Activated CD4-positive, alpha-beta memory T cell treated with anti-CD3 and anti-CD28 coated beads, Interleukin-2, amount 10 ng/mL, durations not matched to agents 7 days and 5 days (primary cell): ENCODE measurements at regions of chr5 and their contacts with region 1.

Region 1: GRCh38 chr5:43313035-43313853 is at the start of gene HMGCS1:
- DNase-seq: peak; percentile 99
- H3K4me3 Mint-ChIP-seq: peak within 1 kb of the TSS; percentile 99
- H3K27ac Mint-ChIP-seq: peak within 1 kb of the TSS; percentile 85
- H3K4me1 Mint-ChIP-seq: peaks cover 73% of the 10 kb centered on the region
- H3K27me3 Mint-ChIP-seq: no peaks in the 10 kb centered on the region
- total RNA-seq, gene HMGCS1: 150 to 155 TPM

Region 2: GRCh38 chr5:42950440-42951292 is 362.6 kb before region 1 on chr5:
- CTCF ChIA-PET with region 1: no interaction called
- POLR2A ChIA-PET with region 1: interaction called, 22 read pairs
- DNase-seq: peak; percentile 77
- H3K4me3 Mint-ChIP-seq: peak overlapping the region; percentile 85
- H3K27ac Mint-ChIP-seq: peak overlapping the region; percentile 100
- H3K4me1 Mint-ChIP-seq: peaks cover 37% of the 10 kb centered on the region
- H3K27me3 Mint-ChIP-seq: no peaks in the 10 kb centered on the region

Region 3: DNA sequence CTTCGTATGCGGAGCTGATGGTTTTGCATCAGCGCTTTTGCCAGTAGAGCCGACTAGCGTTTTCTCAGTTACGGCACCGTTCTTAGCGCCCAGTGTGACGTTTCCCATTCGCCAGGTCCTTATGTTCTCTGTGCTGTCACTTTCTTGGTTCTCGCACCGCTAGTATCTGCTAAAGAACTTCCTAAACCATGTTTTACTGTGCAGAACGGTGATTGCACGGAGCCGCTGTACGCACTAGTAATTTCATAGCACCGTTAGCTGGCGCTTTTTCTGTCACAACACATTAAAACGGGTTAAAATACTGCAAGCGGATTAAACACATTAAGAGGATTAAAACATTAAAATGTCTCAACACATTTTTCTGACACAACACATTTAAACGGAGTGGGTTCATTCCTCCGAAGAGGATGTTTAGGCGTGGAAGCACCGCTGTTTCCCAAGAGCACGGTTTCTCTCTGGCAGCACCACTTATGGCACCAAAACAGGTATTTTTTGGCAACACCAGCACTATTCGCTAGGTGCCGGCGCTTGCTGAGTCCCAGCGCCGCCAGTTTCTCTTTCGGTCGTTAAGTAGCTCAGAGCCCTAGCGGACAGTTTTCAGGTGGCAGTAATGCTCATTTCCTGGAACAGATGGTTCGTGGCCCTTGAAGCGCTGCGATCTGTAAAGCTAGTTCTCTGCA is 293.5 kb before region 1 on chr5:
- CTCF ChIA-PET with region 1: interaction called, 8 read pairs
- POLR2A ChIA-PET with region 1: interaction called, 23 read pairs
- DNase-seq: peak; percentile 90
- H3K4me3 Mint-ChIP-seq: peak overlapping the region; percentile 93
- H3K27ac Mint-ChIP-seq: peak overlapping the region; percentile 99
- H3K4me1 Mint-ChIP-seq: peaks cover 42% of the 10 kb centered on the region
- H3K27me3 Mint-ChIP-seq: no peaks in the 10 kb centered on the region

Region 4: DNA sequence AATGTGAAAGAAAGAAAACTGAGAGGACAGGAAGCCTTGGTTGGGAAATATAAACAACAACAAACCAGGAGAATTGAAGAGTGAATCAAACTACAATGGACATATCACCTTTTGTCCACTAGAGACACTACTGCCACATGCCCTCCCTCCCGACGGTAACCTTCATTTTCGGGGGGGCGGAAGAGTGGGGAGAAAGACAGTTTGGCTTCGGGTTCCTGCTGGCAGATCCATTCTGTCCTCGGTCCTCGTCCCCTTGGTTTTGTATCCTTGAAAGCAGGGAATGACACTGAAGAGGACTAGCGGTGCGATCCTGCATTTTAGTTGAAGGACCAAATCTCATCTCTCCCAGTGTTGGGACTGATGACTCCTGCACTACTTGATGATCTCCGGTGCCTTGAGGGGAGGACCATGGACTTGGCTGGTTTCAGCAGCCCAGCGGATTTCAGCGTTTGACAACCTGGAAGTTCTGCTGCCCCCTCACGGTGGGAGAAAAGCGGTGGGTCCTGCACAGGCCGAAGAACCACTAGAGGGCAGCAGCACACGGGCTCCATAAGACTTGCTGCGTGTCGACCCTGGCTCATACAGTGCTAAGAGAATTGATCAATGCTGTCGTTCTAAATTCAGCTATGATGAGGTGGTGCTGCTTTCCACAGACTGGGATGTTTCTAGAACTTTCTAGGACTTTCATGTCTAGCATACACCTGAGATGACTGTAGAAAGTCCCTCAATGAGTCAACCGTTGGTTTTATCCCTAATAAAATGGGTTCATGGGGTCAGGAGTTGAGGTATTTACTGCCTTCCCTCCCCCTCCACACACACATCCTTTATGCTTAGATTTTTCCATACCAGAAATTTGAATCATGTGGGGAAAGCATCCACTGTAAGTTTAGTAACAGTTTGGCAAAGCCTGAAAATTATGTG is 207.6 kb before region 1 on chr5:
- CTCF ChIA-PET with region 1: interaction called, 23 read pairs
- POLR2A ChIA-PET with region 1: interaction called, 4 read pairs
- DNase-seq: peak; percentile 90
- H3K4me3 Mint-ChIP-seq: peak overlapping the region; percentile 78
- H3K27ac Mint-ChIP-seq: peak overlapping the region; percentile 83
- H3K4me1 Mint-ChIP-seq: peaks cover 45% of the 10 kb centered on the region
- H3K27me3 Mint-ChIP-seq: no peaks in the 10 kb centered on the region

Region 5: GRCh38 chr5:43244823-43245565 is 68.2 kb before region 1 on chr5:
- CTCF ChIA-PET with region 1: no interaction called
- POLR2A ChIA-PET with region 1: no interaction called
- DNase-seq: no peak
- H3K4me3 Mint-ChIP-seq: no peak overlapping the region
- H3K27ac Mint-ChIP-seq: no peak overlapping the region
- H3K4me1 Mint-ChIP-seq: peaks cover 28% of the 10 kb centered on the region
- H3K27me3 Mint-ChIP-seq: peaks cover 13% of the 10 kb centered on the region

Region 6: DNA sequence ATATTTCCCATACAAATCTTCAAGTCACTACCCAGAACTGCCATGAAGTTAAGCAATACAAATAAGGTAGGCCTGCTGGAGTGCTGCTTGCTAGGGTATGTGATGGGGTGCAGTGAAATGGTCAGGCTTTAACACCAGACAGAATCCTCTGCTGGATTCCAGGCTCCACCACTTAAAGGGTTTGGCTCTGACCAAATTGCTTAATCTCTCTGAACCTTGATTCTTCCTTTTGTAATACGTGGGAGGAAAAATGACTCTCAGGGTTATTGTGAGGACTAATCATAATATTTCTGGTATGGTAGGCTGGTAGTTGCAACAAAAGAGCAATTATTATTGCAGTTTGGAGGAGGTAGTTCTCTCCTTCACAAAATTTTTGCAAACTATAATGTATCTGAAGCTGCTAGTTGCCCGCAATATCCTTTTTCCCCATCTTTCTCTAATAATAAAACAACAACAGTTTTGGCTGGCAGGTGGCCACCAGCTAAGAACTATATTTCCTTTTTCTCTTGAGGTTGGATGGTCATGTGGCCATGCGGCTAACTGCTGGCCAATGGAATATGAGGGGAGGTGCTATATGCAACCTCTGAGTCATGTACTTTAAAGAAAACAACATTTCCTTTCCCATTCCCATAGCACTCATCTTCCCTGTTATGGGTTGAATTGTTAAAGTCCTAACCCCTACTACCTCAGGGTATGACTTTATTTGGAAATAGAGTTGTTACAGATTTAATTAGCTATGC is 54.8 kb after region 1 on chr5:
- CTCF ChIA-PET with region 1: no interaction called
- POLR2A ChIA-PET with region 1: no interaction called
- DNase-seq: no peak
- H3K4me3 Mint-ChIP-seq: no peak overlapping the region
- H3K27ac Mint-ChIP-seq: no peak overlapping the region
- H3K4me1 Mint-ChIP-seq: no peaks in the 10 kb centered on the region
- H3K27me3 Mint-ChIP-seq: peaks cover 2% of the 10 kb centered on the region

Region 7: DNA sequence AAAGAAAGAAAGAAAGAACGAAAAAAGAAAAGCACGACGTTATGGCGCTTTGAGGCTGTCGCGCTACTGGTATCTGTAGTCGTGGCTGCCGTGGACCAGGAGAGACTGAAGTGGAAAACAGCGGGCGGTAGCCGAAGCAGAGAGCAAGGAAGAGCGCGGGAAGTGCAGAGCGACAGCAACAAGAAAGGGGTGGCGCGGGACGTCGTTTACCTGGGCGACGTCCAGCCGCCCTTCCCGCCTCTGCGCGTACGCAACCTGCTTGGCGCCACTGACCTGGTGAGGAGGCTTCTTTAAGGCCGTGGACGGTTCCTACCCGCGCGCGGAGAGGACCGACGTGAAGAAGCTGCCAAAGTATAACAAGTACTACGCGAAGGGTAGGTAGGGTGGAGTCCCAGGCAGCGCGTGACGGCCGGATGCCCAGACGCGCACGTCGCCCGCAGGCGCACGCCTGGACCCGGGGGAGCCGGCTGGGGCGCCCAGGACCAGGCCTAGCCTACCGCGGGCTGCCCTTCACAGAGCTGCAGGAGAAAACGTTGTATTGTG is 83.6 kb after region 1 on chr5:
- CTCF ChIA-PET with region 1: interaction called, 3 read pairs
- POLR2A ChIA-PET with region 1: interaction called, 10 read pairs
- DNase-seq: peak; percentile 74
- H3K4me3 Mint-ChIP-seq: peak overlapping the region; percentile 99
- H3K27ac Mint-ChIP-seq: peak overlapping the region; percentile 94
- H3K4me1 Mint-ChIP-seq: peaks cover 33% of the 10 kb centered on the region
- H3K27me3 Mint-ChIP-seq: no peaks in the 10 kb centered on the region